Endothelial cell of umbilical vein (primary cell): ENCODE measurements at regions of chr11 and their contacts with region 1.

Region 1: DNA sequence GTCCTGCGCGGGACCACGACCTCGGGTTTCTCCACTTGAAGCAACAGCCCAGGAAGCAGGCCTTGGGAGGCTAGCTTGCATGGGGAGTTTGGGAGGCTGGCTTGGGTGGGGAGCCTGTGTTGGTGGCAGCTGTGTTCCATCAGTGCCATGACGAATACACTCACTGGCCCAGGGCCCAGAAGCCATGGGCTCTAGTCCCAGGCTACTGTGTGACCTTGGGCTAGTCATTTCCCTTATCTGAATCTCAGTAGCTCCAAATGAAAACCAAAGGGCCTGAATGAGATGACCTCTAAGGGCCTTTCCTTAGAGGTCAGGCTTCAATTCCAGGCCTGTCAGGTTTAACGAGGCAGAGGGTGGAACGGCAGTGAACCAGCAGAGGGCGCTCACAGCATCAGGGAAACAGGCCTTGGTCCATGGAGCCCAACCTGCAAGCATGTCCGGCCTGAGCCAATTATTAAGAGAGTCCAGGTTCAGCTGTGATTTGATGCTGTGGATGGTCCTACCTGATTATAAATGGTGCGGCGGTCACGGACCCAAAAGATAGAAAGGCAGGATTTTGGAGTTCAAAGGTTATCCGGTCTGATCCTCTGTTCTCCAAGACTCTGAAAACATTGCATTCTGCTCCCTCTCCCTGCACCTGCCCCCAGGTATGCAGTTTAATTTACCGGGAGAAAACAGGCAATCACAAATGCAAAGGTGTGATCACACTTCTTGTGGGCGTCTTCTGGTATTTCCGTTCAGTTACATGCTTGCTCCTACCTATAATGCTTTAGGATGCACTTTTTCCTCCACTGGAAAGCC is 15.9 kb downstream of the PTPN5 start:
- DNase-seq: peak; percentile 41
- H3K4me3 ChIP-seq: no peak overlapping the region
- H3K27ac ChIP-seq: no peak overlapping the region
- H3K4me1 ChIP-seq: no peaks in the 10 kb centered on the region
- H3K27me3 ChIP-seq: peaks cover 0 to 1% of the 10 kb centered on the region in 2 experiments
- CTCF ChIP-seq: peak; percentile 89 to 92
- POLR2A ChIP-seq: no peak

Region 2: GRCh38 chr11:18794956-18795355 is 19.3 kb after region 1 on chr11:
- CTCF ChIA-PET with region 1: interaction called, 65 read pairs
- POLR2A ChIA-PET with region 1: no interaction called
- dilution Hi-C with region 1: no loop called
- intact Hi-C with region 1: no loop called
- DNase-seq: no peak
- H3K4me3 ChIP-seq: no peak overlapping the region
- H3K27ac ChIP-seq: no peak overlapping the region
- H3K4me1 ChIP-seq: peaks cover 3% of the 10 kb centered on the region
- H3K27me3 ChIP-seq: peaks cover 37 to 51% of the 10 kb centered on the region in 2 experiments
- CTCF ChIP-seq: no peak
- POLR2A ChIP-seq: no peak

Region 3: GRCh38 chr11:18802381-18803257 is 26.9 kb after region 1 on chr11:
- CTCF ChIA-PET with region 1: interaction called, 65 read pairs
- POLR2A ChIA-PET with region 1: no interaction called
- dilution Hi-C with region 1: no loop called
- intact Hi-C with region 1: loop called (anchors 1 kb)
- DNase-seq: peak; percentile 69
- H3K4me3 ChIP-seq: no peak overlapping the region
- H3K27ac ChIP-seq: no peak overlapping the region
- H3K4me1 ChIP-seq: peaks cover 3% of the 10 kb centered on the region
- H3K27me3 ChIP-seq: peaks cover 8 to 13% of the 10 kb centered on the region in 2 experiments
- CTCF ChIP-seq: peak; percentile 53 to 57
- POLR2A ChIP-seq: no peak

Region 4: DNA sequence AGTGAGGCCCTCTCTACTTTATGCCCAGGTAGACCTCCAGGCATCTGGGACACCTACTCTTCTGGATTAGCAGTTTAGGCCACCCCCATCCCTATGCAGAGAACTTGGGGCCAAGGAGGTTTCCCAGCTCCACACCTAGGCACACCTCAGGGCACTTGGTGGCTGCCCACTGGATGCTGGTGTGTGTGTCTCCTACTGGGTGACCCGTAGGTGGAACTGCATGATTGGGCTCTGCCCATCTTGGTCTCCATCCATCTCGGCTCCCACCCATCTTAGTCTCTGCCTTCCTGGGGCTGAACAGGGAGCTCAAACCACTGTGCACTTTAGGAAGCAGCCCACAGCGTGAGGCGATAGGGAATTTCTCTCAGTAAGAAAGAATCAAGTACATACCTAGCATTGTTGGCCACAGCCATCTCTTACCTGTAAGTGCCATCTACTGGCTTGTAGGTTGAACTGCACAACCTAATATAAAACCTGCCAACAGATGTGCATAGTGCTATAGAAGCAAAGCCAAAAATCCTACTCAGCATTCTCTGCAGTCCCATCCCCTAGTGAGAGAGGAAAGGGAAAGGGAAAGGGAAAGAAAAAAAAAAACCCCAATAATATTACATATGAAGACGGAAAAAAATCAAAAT is 77.5 kb after region 1 on chr11:
- CTCF ChIA-PET with region 1: interaction called, 3 read pairs
- POLR2A ChIA-PET with region 1: no interaction called
- dilution Hi-C with region 1: no loop called
- intact Hi-C with region 1: loop called (anchors 1 kb)
- DNase-seq: peak; percentile 17
- H3K4me3 ChIP-seq: no peak overlapping the region
- H3K27ac ChIP-seq: no peak overlapping the region
- H3K4me1 ChIP-seq: no peaks in the 10 kb centered on the region
- H3K27me3 ChIP-seq: peaks cover 0 to 7% of the 10 kb centered on the region in 2 experiments
- CTCF ChIP-seq: peak; percentile 23 to 46
- POLR2A ChIP-seq: no peak